Transverse colon (tissue), 4 donors: ENCODE measurements at regions of chr3 and their contacts with region 1.

Region 1: DNA sequence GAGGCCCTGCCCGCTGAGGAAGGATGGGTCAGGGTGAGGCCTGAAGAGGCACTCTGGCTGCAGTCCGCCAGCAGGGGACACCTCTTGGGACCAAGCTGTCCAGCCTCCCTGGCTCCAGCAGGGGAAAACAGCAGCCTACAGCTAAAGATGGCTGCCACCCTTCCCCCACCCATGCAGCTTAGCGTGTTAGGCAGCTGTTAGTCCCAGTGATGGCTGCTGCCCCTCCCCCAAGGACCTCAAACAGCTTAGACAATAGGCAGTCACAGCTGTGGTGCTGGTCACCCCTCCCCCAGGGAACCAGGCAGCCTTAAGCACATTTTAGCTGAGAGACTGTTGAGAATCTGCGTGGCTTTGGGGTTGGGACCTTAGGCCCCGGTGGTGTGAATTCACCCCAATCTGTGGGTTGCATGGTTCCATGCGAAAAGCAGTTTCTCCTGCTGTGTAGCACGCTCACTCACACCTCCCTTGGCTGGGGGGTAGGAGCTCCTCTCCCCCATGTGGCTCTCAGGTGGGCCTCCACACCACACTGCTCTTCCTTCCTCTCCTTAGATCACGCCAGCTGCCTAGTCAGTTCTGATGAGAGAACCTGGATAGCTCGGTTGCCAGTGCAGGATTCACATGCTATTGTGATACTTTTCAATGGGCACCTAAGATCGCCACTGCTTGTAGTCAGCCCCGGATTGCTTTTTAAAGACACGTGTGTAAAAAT is 140.5 kb upstream of the CADPS start:
- DNase-seq: no peak
- H3K4me3 ChIP-seq: no peak overlapping the region
- H3K27ac ChIP-seq: no peak overlapping the region
- H3K4me1 ChIP-seq: no peaks in the 10 kb centered on the region
- H3K27me3 ChIP-seq: no peaks in the 10 kb centered on the region
- CTCF ChIP-seq: no peak
- EP300 ChIP-seq: no peak
- POLR2A ChIP-seq: no peak

Region 2: GRCh38 chr3:63069799-63070475 is 54.2 kb after region 1 on chr3:
- in situ Hi-C with region 1: loop called in 1 of 4 experiments (anchors 5 kb)
- intact Hi-C with region 1: no loop called
- DNase-seq: no peak
- H3K4me3 ChIP-seq: no peak overlapping the region
- H3K27ac ChIP-seq: no peak overlapping the region
- H3K4me1 ChIP-seq: no peaks in the 10 kb centered on the region
- H3K27me3 ChIP-seq: no peaks in the 10 kb centered on the region
- CTCF ChIP-seq: no peak
- EP300 ChIP-seq: no peak
- POLR2A ChIP-seq: no peak